ENCODE measurements at regions of chr4 and their contacts with region 1.

Region 1: DNA sequence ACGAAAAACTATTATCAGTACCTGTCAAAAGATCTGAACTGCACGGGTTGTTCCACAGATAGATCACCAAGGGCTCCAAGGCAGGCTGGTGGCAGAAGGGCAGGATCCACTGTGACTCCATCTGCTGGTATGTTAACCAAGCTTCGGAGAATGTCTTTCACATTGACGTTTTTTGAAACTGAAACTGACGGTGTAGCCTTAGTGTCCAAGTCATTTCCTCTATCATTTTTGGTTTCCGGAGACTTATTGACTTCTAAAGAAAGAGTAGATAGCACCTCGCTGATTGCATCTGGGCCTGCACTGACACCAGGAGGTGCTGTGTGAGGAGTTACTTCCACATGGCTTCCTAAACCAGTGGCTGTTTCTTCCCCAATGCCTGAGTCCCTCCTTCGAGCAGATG is 186.9 kb downstream of the LRBA start:
- DNase-seq: peak; percentile 76
- H3K4me3 Mint-ChIP-seq: no peak overlapping the region
- H3K27ac Mint-ChIP-seq: peak overlapping the region; percentile 72
- H3K4me1 Mint-ChIP-seq: peaks cover 42% of the 10 kb centered on the region
- H3K27me3 Mint-ChIP-seq: no peaks in the 10 kb centered on the region

Region 2: DNA sequence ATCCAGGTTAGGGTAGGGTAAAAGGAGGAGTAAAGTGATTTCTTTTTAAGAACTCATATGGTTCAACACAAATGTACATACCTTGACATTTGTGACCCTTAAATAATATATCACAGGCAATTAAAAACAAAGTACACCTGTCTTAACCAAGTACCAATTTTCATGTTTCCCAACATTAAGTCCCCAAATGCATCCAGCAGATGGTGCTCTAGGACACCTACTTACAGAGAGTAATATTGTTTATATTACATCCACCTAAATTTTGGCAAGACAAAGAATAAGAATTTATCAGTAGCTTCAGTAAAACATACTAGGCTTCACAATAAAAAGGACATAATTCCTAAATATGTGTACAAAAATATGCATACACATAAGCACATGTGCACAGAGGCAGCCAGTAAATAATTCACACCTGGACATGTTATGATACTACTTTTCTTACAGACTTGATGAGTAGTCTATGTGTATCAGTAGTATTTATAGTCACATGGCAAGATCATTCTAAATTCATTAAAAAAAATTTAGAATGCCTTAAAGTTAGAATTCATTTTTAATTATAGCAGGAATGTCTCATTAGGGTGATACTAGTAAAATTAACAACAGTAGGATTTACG is 530.2 kb before region 1 on chr4:
- CTCF ChIA-PET with region 1: no interaction called
- POLR2A ChIA-PET with region 1: no interaction called
- intact Hi-C with region 1: loop called (anchors 1 kb)
- DNase-seq: peak; percentile 34
- H3K4me3 Mint-ChIP-seq: no peak overlapping the region
- H3K27ac Mint-ChIP-seq: no peak overlapping the region
- H3K4me1 Mint-ChIP-seq: peaks cover 7% of the 10 kb centered on the region
- H3K27me3 Mint-ChIP-seq: no peaks in the 10 kb centered on the region

Region 3: DNA sequence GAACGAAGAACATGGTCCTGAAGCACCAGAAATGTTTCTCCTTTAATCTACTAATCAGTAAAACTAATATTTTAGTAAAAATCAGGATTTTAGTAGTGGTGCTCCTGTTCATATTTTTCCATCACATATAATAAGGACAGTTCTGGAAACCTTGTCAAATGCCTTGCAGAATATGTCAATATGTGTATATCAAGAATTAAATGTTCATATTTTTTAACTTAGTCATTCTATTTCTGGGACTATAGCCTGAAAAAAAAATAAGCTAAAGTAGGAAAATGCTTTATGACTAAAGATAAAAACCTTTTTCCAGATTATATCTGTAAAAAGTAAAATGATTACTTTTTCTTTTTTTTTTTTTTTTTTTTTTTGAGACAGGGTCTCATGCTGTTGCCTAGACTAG is 181.2 kb before region 1 on chr4:
- CTCF ChIA-PET with region 1: no interaction called
- POLR2A ChIA-PET with region 1: no interaction called
- intact Hi-C with region 1: no loop called
- DNase-seq: no peak
- H3K4me3 Mint-ChIP-seq: no peak overlapping the region
- H3K27ac Mint-ChIP-seq: no peak overlapping the region
- H3K4me1 Mint-ChIP-seq: no peaks in the 10 kb centered on the region
- H3K27me3 Mint-ChIP-seq: no peaks in the 10 kb centered on the region

Region 4: GRCh38 chr4:150960818-150961217 is 132.7 kb after region 1 on chr4:
- CTCF ChIA-PET with region 1: interaction called, 4 read pairs
- POLR2A ChIA-PET with region 1: no interaction called
- intact Hi-C with region 1: loop called (anchors 2 kb)
- DNase-seq: peak; percentile 81
- H3K4me3 Mint-ChIP-seq: no peak overlapping the region
- H3K27ac Mint-ChIP-seq: no peak overlapping the region
- H3K4me1 Mint-ChIP-seq: peaks cover 47% of the 10 kb centered on the region
- H3K27me3 Mint-ChIP-seq: no peaks in the 10 kb centered on the region

Region 5: GRCh38 chr4:150970685-150971151 is 142.6 kb after region 1 on chr4:
- CTCF ChIA-PET with region 1: interaction called, 3 read pairs
- POLR2A ChIA-PET with region 1: no interaction called
- intact Hi-C with region 1: loop called (anchors 1 kb)
- DNase-seq: no peak
- H3K4me3 Mint-ChIP-seq: no peak overlapping the region
- H3K27ac Mint-ChIP-seq: peak overlapping the region; percentile 10
- H3K4me1 Mint-ChIP-seq: peaks cover 59% of the 10 kb centered on the region
- H3K27me3 Mint-ChIP-seq: no peaks in the 10 kb centered on the region

Region 6: DNA sequence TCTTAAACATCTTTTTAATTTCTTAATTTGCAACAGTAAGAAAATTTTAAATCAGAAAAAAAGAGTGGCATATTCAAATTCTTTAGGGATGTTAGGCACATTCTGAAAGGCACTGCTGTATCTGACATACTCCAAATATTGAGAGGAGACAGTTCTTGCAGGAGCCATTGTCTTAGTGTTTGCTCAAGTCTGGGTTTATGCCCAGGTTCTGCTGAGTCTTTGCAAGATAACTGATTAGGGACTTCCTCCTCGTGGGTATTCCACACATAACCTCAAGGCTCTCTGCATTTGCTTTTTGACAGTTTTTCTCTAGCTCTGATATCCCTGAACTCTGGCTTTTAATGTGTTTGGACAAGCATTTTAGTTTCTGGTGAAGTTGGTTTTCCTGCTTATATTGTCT is 323.9 kb after region 1 on chr4:
- CTCF ChIA-PET with region 1: no interaction called
- POLR2A ChIA-PET with region 1: no interaction called
- intact Hi-C with region 1: no loop called
- DNase-seq: no peak
- H3K4me3 Mint-ChIP-seq: no peak overlapping the region
- H3K27ac Mint-ChIP-seq: no peak overlapping the region
- H3K4me1 Mint-ChIP-seq: no peaks in the 10 kb centered on the region
- H3K27me3 Mint-ChIP-seq: peaks cover 2% of the 10 kb centered on the region

Measured in activated CD4-positive, alpha-beta memory T cell treated with anti-CD3 and anti-CD28 coated beads for 36 hours (primary cell).